ENCODE measurements at regions of chr15 and their contacts with region 1.

Region 1: GRCh38 chr15:36726224-36726623 is 146.8 kb downstream of the CDIN1 start:
- DNase-seq: no peak
- H3K4me3 ChIP-seq: no peak overlapping the region
- H3K27ac ChIP-seq: no peak overlapping the region
- H3K4me1 ChIP-seq: no peaks in the 10 kb centered on the region
- H3K27me3 ChIP-seq: no peaks in the 10 kb centered on the region
- CTCF ChIP-seq: no peak
- POLR2A ChIP-seq: no peak

Region 2: DNA sequence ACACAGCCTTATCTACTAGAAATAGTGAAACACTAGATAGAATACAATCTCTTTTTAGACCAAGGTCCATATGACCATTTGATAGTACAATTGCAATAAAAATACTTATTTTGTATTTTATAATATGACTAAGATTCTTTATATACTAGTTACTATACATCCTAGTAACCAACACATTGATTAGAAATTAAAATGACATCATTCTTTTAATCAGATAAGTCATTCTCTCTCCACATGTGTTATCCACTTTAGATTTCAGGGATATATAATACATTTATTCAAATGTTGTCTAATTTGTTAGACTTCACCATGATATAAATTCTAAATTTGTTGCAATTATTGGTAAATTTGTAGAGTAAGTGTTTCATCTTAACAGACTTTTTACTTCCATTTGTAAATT is 904.1 kb before region 1 on chr15:
- intact Hi-C with region 1: loop called (anchors 5 kb)
- DNase-seq: no peak
- H3K4me3 ChIP-seq: no peak overlapping the region
- H3K27ac ChIP-seq: no peak overlapping the region
- H3K4me1 ChIP-seq: no peaks in the 10 kb centered on the region
- H3K27me3 ChIP-seq: no peaks in the 10 kb centered on the region
- CTCF ChIP-seq: no peak
- POLR2A ChIP-seq: no peak

Region 3: GRCh38 chr15:36707884-36708435 is 18.3 kb before region 1 on chr15:
- intact Hi-C with region 1: no loop called
- DNase-seq: no peak
- H3K4me3 ChIP-seq: no peak overlapping the region
- H3K27ac ChIP-seq: no peak overlapping the region
- H3K4me1 ChIP-seq: no peaks in the 10 kb centered on the region
- H3K27me3 ChIP-seq: no peaks in the 10 kb centered on the region
- CTCF ChIP-seq: no peak
- POLR2A ChIP-seq: no peak

Region 4: DNA sequence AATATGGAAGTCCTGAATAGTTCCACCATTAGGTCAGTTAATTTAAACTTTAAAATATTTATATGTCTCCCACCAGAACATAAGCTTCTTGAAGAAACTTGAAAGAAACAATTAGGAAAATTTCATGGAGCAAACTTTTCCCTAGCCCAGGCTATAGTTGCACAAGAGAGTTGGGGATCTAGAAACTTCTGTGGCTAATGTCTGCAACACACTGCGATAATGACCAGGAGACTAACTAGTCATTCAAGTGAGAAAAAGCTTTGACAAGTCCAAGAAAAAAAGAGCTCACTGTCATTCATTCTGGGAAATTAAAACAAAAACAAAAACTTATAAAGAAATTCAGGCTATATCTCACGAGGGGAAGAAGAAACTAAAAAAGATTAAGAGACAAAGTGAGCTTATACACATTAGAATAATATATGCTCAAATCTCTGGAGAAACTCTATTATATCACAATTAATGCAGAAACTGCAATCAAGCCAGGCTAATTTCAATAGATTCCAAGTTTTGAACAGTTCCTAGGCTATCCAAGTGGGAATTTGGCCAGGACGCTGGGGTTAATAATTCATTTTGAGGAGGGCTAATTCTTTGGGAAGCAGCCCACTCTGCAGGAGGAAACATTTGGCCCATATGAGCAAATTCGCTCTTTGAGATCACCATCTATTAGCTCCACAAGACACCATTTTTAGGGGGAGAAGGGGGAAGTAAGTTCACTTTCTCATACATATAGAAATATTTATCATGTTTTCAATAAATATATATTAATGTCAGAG is 239.5 kb after region 1 on chr15:
- intact Hi-C with region 1: no loop called
- DNase-seq: no peak
- H3K4me3 ChIP-seq: no peak overlapping the region
- H3K27ac ChIP-seq: no peak overlapping the region
- H3K4me1 ChIP-seq: no peaks in the 10 kb centered on the region
- H3K27me3 ChIP-seq: no peaks in the 10 kb centered on the region
- CTCF ChIP-seq: no peak
- POLR2A ChIP-seq: no peak

Measured in breast epithelium (tissue), 4 donors.